Naive thymus-derived CD4-positive, alpha-beta T cell (primary cell): ENCODE measurements at regions of chr17 and their contacts with region 1.

Region 1: GRCh38 chr17:36545465-36546417 is 1.0 kb downstream of the GGNBP2 start:
- DNase-seq: peak; percentile 95 to 98 (median 98)
- ATAC-seq: peak; percentile 87
- H3K4me3 ChIP-seq: peak overlapping the region; percentile 93
- H3K4me3 Mint-ChIP-seq: peak overlapping the region; percentile 87 to 97 (median 94)
- H3K27ac ChIP-seq: peak overlapping the region; percentile 94
- H3K27ac Mint-ChIP-seq: peak overlapping the region; percentile 90 to 96 (median 94)
- H3K4me1 ChIP-seq: peaks cover 40 to 44% of the 10 kb centered on the region in 2 donors
- H3K4me1 Mint-ChIP-seq: peaks cover 13 to 57% (median 44%) of the 10 kb centered on the region in 7 donors
- H3K27me3 ChIP-seq: no peaks in the 10 kb centered on the region
- H3K27me3 Mint-ChIP-seq: no peaks in the 10 kb centered on the region

Region 2: DNA sequence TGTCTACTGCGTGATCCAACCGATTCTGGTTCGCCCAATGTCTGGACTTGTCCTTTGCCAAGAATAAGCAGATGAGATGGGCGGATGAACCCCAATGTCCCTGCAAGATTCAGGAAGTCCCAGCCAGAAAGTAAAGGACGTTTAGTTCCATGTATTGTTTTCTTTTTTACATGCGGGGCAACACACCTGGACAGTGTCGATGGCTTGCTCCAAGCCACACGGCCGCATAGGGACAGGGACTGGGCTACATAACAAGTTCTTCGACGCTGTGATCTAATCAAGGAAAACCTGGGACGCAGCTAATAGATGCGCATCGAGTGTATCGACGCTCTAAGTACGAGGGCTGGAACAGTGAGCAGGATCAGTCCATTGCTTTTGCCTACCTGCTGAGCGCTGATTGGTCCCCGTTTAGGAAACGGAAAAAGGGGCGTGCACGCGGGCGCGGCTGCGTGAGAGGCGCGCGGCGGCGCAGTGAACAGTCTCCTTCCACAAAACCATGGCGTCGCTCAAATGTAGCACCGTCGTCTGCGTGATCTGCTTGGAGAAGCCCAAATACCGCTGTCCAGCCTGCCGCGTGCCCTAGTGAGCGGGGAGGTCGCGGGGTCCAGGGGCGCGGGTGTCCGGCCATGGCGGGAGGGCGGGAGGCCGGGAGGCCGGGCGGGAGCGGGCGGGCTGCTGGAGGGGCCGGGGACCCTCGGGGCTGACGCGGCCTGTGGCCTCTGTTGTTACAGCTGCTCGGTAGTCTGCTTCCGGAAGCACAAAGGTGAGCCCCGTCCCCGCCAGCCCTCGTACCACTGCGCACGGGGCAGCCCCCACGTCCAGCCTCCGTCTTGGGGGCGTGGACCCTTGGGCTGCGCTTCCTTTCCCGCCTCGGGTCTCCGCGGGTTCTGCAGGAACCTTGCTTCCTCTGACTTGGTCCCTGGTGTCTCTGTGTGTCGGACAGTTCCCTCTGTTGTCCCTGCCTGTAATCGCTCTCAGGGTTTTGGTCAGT is 59.2 kb before region 1 on chr17 and contains the start of gene ZNHIT3:
- CTCF ChIA-PET with region 1: no interaction called
- POLR2A ChIA-PET with region 1: interaction called, 10 read pairs
- intact Hi-C with region 1: loop called (anchors 1 kb)
- DNase-seq: peak; percentile 74 to 94 (median 91)
- ATAC-seq: peak; percentile 98
- H3K4me3 ChIP-seq: peak within 1 kb of the TSS; percentile 82
- H3K4me3 Mint-ChIP-seq: peak within 1 kb of the TSS; percentile 87 to 100 (median 100)
- H3K27ac ChIP-seq: peak within 1 kb of the TSS; percentile 86
- H3K27ac Mint-ChIP-seq: peak within 1 kb of the TSS; percentile 94 to 100 (median 99)
- H3K4me1 ChIP-seq: peaks cover 29 to 41% of the 10 kb centered on the region in 2 donors
- H3K4me1 Mint-ChIP-seq: peaks cover 39 to 70% (median 49%) of the 10 kb centered on the region in 7 donors
- H3K27me3 ChIP-seq: no peaks in the 10 kb centered on the region
- H3K27me3 Mint-ChIP-seq: peaks cover 8 to 11% (median 10%) of the 10 kb centered on the region in 5 donors
- total RNA-seq, gene ZNHIT3: 38.4 to 59.9 (median 57.4) TPM

Region 3: DNA sequence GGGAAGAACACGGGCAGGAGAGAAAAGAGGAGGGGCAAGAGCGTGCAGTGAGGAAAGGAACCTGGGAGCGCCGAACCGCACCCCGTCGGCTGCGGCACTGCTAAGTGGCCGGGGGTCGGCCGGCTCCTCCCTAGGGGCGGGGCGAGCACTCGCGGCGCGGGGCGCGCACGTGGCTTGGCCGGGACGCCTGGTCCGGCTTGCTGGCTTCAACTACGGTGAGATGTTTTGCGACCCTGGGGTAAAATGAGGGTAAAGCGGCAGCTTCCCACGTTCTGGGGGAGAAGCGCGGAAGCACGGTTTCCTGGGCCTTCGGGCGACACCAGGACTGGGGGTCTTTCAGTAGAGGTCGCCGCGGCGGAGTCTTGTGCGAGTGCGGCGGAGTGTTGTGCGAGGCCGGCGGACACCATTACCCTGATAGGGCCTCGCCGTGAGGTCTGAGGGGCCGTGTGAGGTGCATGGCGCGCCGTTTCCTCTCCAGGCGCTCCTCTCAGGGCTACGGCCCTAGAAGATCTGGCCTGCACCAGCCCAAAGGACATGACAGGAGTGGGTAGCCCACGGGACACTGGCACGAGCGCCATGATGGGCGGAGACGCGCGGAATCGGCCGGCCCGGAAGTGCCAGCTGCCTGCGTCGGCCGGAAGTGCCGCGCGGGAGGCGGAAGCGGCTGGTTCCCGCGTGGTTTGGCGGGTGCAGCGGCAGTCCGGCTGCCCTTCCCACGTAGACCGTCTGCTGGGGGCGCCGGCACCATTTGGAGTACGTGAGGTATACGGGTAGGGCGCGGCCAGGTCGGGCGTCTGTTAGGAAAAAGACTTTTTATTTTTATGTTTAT is 10.7 kb before region 1 on chr17 and contains the starts of genes MYO19 and PIGW:
- CTCF ChIA-PET with region 1: interaction called, 6 read pairs
- POLR2A ChIA-PET with region 1: interaction called, 130 read pairs
- intact Hi-C with region 1: loop called (anchors 1 kb)
- DNase-seq: peak; percentile 74 to 90 (median 81)
- ATAC-seq: peak; percentile 88
- H3K4me3 ChIP-seq: peak within 1 kb of the TSS; percentile 100
- H3K4me3 Mint-ChIP-seq: peak within 1 kb of the TSS; percentile 93 to 100 (median 98)
- H3K27ac ChIP-seq: peak within 1 kb of the TSS; percentile 97
- H3K27ac Mint-ChIP-seq: peak within 1 kb of the TSS; percentile 94 to 99 (median 97)
- H3K4me1 ChIP-seq: peaks cover 6% of the 10 kb centered on the region in 2 donors
- H3K4me1 Mint-ChIP-seq: peaks cover 5 to 38% (median 12%) of the 10 kb centered on the region in 7 donors
- H3K27me3 ChIP-seq: no peaks in the 10 kb centered on the region
- H3K27me3 Mint-ChIP-seq: no peaks in the 10 kb centered on the region
- total RNA-seq, gene MYO19: 65.2 to 114 (median 76.9) TPM
- total RNA-seq, gene PIGW: 4.2 to 15.6 (median 5.4) TPM

Region 4: DNA sequence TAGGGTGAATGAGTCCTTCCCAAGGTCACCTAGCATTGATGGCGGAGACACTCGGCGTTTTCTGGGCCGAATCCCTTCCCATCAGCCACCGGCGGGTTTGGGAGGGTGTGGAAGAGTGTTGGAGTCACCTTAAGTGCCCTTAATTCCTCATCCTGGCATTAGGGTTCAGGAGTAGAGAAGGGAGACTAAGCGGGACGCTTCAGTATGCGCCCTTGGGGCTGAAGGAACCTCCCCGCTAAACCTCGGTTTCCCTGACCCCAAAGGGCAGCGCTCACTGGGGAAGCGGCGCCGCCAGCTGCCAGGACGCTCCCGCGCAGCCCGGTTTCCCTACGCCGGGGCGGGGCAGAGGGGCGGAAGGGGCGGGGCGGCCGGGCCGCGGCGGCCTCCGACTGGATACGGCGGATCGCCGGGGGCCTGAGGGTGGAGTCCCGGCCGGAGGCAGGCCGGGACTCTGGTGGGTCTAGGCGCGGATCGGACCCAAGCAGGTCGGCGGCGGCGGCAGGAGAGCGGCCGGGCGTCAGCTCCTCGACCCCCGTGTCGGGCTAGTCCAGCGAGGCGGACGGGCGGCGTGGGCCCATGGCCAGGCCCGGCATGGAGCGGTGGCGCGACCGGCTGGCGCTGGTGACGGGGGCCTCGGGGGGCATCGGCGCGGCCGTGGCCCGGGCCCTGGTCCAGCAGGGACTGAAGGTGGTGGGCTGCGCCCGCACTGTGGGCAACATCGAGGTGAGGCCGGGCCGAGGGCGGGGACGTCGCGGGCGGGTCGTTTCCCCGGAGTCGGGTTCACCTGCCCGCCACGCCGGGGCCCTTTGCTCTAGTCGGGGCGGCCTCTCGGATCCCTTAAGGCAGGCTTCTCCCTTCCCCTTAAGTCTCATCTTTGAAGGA is 45.9 kb after region 1 on chr17 and contains the start of gene DHRS11:
- CTCF ChIA-PET with region 1: no interaction called
- POLR2A ChIA-PET with region 1: interaction called, 12 read pairs
- intact Hi-C with region 1: loop called (anchors 1 to 5 kb)
- DNase-seq: peak; percentile 36 to 88 (median 54)
- ATAC-seq: peak; percentile 94
- H3K4me3 ChIP-seq: peak within 1 kb of the TSS; percentile 49
- H3K4me3 Mint-ChIP-seq: peak within 1 kb of the TSS; percentile 63 to 86 (median 82)
- H3K27ac ChIP-seq: peak within 1 kb of the TSS; percentile 81
- H3K27ac Mint-ChIP-seq: peak within 1 kb of the TSS; percentile 49 to 90 (median 81)
- H3K4me1 ChIP-seq: peaks cover 8 to 9% of the 10 kb centered on the region in 2 donors
- H3K4me1 Mint-ChIP-seq: peaks cover 21 to 35% (median 25%) of the 10 kb centered on the region in 7 donors
- H3K27me3 ChIP-seq: no peaks in the 10 kb centered on the region
- H3K27me3 Mint-ChIP-seq: no peaks in the 10 kb centered on the region
- total RNA-seq, gene DHRS11: 1.6 to 10.9 (median 5.1) TPM

Region 5: GRCh38 chr17:36948717-36949460 is 403.1 kb after region 1 on chr17 and contains the start of gene AATF:
- CTCF ChIA-PET with region 1: no interaction called
- POLR2A ChIA-PET with region 1: no interaction called
- intact Hi-C with region 1: loop called in 1 of 2 experiments (anchors 2 kb)
- DNase-seq: peak; percentile 93 to 99 (median 97)
- ATAC-seq: peak; percentile 99
- H3K4me3 ChIP-seq: peak within 1 kb of the TSS; percentile 69
- H3K4me3 Mint-ChIP-seq: peak within 1 kb of the TSS; percentile 91 to 99 (median 95)
- H3K27ac ChIP-seq: peak within 1 kb of the TSS; percentile 85
- H3K27ac Mint-ChIP-seq: peak within 1 kb of the TSS; percentile 91 to 97 (median 94)
- H3K4me1 ChIP-seq: peaks cover 21 to 33% of the 10 kb centered on the region in 2 donors
- H3K4me1 Mint-ChIP-seq: peaks cover 43 to 60% (median 51%) of the 10 kb centered on the region in 7 donors
- H3K27me3 ChIP-seq: peaks cover 7 to 18% of the 10 kb centered on the region in 2 donors
- H3K27me3 Mint-ChIP-seq: peaks cover 26 to 45% (median 34%) of the 10 kb centered on the region in 5 donors
- total RNA-seq, gene AATF: 39.7 to 70.8 (median 58.7) TPM

Region 6: DNA sequence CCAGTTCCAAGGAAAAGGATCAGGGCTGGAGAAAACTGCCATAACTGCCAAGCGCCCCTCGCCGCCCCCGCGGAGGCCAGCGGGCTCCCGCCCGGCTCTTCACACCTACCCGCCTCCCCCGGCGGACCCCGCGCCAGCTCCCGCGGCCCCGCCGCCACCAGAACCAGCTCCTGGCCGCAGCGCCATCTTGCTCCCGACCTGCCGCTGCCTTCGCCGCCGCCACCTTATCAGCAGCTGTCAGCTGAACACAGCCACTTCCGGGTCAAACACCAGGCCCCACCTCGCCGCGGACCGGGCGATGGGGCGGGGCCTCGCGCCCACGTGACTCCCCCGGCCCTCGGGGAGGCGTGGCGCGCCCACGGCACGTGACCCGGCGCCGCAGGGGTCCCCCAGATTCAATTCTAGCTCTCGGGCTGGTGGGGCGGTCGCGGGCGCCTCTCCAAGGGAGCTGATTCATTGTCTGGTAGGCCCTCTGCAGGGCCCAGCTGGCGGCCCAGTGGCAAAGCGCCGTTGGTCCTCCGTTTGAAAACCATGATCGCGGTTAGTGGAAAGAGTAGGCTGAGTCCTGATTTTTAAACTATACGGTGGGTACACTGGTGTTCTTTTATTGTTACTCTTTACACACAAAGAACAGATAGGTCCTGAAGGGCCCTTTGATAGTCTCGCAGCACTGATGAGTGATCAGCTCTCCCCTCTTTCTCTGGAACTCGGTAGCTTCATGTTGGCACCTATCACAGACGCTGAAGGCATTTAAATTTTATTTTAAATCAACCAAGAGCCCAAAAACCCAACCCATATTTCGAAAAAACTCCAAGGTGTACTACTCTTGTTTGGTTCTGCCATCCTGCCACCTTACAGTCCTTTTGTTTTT is 1063.7 kb after region 1 on chr17 and contains the start of gene SYNRG:
- CTCF ChIA-PET with region 1: no interaction called
- POLR2A ChIA-PET with region 1: interaction called, 6 read pairs
- intact Hi-C with region 1: loop called in 1 of 2 experiments (anchors 5 kb)
- DNase-seq: peak; percentile 92 to 96 (median 93)
- ATAC-seq: peak; percentile 93
- H3K4me3 ChIP-seq: peak within 1 kb of the TSS; percentile 58
- H3K4me3 Mint-ChIP-seq: peak within 1 kb of the TSS; percentile 74 to 97 (median 88)
- H3K27ac ChIP-seq: peak within 1 kb of the TSS; percentile 91
- H3K27ac Mint-ChIP-seq: peak within 1 kb of the TSS; percentile 82 to 95 (median 92)
- H3K4me1 ChIP-seq: peaks cover 31 to 32% of the 10 kb centered on the region in 2 donors
- H3K4me1 Mint-ChIP-seq: peaks cover 26 to 44% (median 38%) of the 10 kb centered on the region in 7 donors
- H3K27me3 ChIP-seq: no peaks in the 10 kb centered on the region
- H3K27me3 Mint-ChIP-seq: no peaks in the 10 kb centered on the region
- total RNA-seq, gene SYNRG: 85.0 to 146 (median 128) TPM